HAP-1 (cell line): ENCODE measurements at regions of chr1 and their contacts with region 1.

Region 1: GRCh38 chr1:204363335-204364124 is 3.8 kb upstream of the PLEKHA6 start:
- DNase-seq: peak; percentile 62 to 79
- H3K4me3 ChIP-seq: peak overlapping the region; percentile 15
- H3K4me1 ChIP-seq: peaks cover 4% of the 10 kb centered on the region; the same call in 1 of the 2 replicates
- H3K27me3 ChIP-seq: peaks cover under 1% of the 10 kb centered on the region; the same call in 1 of the 2 replicates

Region 2: GRCh38 chr1:203861379-203862184 is 501.9 kb before region 1 on chr1 and contains the start of gene SNRPE:
- in situ Hi-C with region 1: loop called (anchors 25 kb)
- DNase-seq: peak; percentile 96
- H3K4me3 ChIP-seq: peak within 1 kb of the TSS; percentile 97
- H3K4me1 ChIP-seq: peaks cover 23% of the 10 kb centered on the region
- H3K27me3 ChIP-seq: no peaks in the 10 kb centered on the region

Region 3: GRCh38 chr1:203926025-203926540 is 437.4 kb before region 1 on chr1:
- in situ Hi-C with region 1: no loop called
- DNase-seq: no peak
- H3K4me3 ChIP-seq: no peak overlapping the region
- H3K4me1 ChIP-seq: no peaks in the 10 kb centered on the region
- H3K27me3 ChIP-seq: no peaks in the 10 kb centered on the region

Region 4: GRCh38 chr1:204018463-204018862 is 345.1 kb before region 1 on chr1:
- in situ Hi-C with region 1: no loop called
- DNase-seq: no peak
- H3K4me3 ChIP-seq: no peak overlapping the region
- H3K4me1 ChIP-seq: peaks cover 20% of the 10 kb centered on the region
- H3K27me3 ChIP-seq: no peaks in the 10 kb centered on the region

Region 5: DNA sequence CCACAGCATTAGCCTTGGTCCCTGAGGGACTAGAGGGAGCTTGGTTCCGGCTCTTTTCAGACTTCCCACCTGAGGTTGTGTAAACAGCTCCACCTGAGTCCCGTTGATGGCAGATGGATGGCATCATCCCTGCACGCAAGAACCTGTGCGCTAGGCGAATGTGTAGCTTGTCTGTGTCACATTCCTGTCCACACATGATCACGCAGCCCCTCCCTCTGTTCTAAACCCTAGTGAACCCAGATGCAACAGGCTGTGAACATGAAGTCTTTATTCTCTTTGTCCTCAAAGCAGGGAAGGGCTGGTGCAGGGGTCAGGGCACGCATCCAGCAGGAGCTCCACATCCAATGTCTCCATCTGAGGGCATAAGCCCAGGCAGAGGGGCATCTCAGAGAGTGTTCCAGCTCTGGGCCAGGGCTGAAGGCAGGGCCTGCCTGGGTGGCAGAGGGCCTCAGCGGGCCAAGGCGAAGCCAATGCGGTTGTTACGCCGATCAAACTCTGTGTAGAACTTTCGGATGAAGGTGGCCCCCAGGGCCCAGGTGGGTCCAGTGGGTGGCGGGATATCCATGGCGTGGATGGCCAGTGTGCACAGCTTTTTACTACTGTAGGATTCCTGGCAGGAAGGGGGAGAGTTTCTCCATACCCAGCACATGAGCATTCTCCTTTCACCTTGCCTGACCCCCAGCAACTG is 208.8 kb before region 1 on chr1:
- in situ Hi-C with region 1: loop called (anchors 5 kb)
- DNase-seq: no peak
- H3K4me3 ChIP-seq: no peak overlapping the region
- H3K4me1 ChIP-seq: no peaks in the 10 kb centered on the region
- H3K27me3 ChIP-seq: no peaks in the 10 kb centered on the region